Heart right ventricle (tissue), 16 donors: ENCODE measurements at regions of chr15 and their contacts with region 1.

Region 1: DNA sequence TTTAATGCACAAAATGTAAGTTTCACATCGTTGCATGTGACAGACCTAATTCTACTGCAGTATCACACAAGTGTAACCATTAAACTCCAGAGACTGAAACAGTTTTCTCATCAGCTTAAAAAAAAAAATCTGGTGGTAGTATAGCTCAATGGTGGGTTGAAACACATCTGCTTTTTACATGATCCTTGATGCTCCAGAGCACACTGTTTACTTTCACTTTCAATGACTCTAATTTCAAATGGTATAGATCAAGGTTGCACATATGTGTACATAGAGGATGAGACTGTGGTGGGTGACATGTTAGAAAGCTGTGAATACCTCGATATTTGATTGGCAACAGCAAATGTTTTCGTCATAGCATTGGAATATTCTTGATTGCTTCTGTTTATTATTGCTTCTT is 22.4 kb downstream of the MCTP2 start:
- DNase-seq: no peak
- ATAC-seq: no peak
- H3K4me3 ChIP-seq: no peak overlapping the region
- H3K27ac ChIP-seq: no peak overlapping the region
- H3K4me1 ChIP-seq: peaks cover 0 to 37% (median 0%) of the 10 kb centered on the region in 9 donors
- H3K27me3 ChIP-seq: peaks cover 0 to 7% (median 0%) of the 10 kb centered on the region in 7 donors
- CTCF ChIP-seq: no peak

Region 2: DNA sequence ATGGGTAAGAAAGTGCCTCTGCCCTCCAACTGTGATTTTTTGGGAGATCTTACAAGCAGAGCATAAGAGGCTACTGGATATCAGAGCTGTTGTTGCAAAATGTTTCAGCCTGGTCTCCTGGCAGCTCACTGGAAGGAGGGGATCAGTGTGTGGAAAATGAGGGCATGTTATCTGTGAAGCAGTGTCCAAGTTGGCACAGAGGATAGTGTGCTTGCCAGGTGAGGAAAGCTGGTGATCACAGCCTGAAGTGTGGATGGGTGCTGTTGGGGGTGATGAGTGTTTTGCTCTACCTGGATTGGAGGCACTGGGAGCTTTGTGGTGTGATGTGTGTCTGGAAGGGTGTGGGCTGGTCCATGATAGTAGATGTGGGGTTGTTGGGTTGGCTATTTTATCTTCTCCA is 46.9 kb after region 1 on chr15:
- intact Hi-C with region 1: loop called in 1 of 10 experiments (anchors 5 kb)
- DNase-seq: peak in 1 of 2 donors; percentile 51
- ATAC-seq: peak; percentile 73 to 99 (median 94)
- H3K4me3 ChIP-seq: no peak overlapping the region
- H3K27ac ChIP-seq: no peak overlapping the region
- H3K4me1 ChIP-seq: peaks cover 0 to 42% (median 0%) of the 10 kb centered on the region in 9 donors
- H3K27me3 ChIP-seq: peaks cover 0 to 9% (median 0%) of the 10 kb centered on the region in 7 donors
- CTCF ChIP-seq: no peak